GM13977 (cell line): ENCODE measurements at regions of chr3 and their contacts with region 1.

Region 1: GRCh38 chr3:149129326-149130205 is at the start of gene HPS3:
- DNase-seq: peak; percentile 94
- CTCF ChIP-seq: no peak

Region 2: DNA sequence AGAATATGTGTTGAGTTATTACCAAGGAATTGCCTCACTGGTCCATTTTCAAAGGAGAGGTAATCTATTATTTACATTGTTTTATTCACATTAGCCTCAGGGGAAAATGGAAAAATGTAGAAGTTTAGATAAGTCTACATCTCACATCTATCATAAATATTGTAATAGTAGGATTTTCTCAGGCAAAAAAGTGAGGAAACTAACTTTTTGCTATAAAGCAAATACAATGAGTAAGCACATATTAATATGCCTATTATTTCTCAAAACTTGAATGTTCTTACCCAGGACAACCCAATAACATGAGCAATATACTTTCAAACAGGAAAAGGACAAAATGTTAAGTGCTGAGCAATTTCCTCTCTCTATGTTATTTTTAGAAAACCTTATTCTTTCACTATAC is 616.4 kb before region 1 on chr3:
- in situ Hi-C with region 1: no loop called
- DNase-seq: no peak
- CTCF ChIP-seq: no peak

Region 3: GRCh38 chr3:148847351-148847750 is 282.2 kb before region 1 on chr3:
- in situ Hi-C with region 1: no loop called
- DNase-seq: no peak
- CTCF ChIP-seq: no peak

Region 4: DNA sequence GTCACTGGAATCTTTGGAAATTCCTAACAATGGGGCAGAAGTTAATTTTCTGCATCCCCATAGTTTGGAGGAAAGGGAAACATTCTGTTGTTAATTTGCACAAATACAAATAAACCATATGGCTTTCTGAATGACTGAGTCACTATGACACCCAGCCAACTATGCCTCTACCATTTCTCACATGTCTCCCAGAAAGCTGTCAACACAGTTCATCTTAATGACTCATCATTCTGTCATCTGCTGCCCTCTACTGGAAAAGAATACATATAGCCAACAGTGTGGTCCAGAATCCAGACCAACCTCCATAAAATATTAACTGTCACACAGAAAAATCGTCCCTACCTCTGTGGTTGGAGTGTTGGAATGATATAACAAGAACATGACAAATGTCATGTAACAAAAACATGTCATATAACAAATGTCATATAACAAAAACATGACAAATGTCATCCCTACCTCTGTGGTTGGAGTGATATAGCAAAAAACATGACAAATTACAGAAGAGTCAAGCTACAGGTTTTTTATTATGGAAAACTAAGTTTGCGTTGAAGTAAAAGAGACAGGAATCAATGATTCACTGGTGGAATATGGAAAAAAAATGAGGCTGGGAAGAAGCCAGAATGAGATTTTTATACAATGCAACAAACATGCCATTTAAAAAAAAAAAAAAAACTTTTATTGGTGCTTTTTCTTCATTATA is 185.9 kb before region 1 on chr3:
- in situ Hi-C with region 1: no loop called
- DNase-seq: peak; percentile 79
- CTCF ChIP-seq: peak; percentile 68

Region 5: DNA sequence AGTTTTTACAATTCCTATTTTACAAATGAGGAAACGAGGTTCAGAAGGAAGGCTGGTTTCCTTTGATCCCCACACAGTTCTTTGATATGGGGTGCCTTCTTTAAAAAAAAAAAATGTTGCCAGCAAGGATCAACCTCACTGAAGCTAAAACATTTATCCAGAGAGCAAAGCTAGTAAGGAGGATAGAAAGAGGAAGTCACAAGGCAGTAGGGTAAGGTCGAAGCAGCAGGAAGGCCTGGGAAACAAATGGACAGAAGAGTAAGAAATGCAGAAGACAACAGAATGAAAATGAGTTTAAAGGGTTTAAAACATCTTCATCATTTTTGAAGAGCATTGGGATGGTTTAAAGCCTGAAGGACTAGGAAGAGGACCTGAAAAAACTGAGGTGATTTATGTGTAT is 122.7 kb after region 1 on chr3:
- in situ Hi-C with region 1: no loop called
- DNase-seq: no peak
- CTCF ChIP-seq: no peak

Region 6: GRCh38 chr3:149263856-149264255 is 134.3 kb after region 1 on chr3:
- in situ Hi-C with region 1: loop called (anchors 5 kb)
- DNase-seq: no peak
- CTCF ChIP-seq: no peak